AG04450 (cell line): ENCODE measurements at regions of chr15 and their contacts with region 1.

Region 1: DNA sequence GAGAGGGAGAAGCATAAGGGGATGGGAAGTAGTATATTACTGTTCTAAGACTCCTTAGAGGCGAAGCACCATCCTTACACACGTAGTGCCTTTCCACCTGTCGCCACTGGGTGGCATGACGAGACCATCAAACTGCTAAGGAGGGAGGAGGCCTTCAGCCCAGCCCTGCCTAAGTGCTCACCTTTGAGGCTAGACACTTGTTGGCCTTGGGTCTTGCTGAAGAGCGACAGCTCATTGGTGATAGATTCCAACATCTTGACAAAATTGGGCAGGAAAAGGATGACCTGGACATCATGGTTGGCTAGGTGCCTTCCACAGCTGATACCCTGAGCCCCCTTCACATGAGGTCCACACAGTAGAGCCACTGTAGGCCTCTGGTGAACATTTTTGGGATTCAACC is 19.6 kb downstream of the CLK3 start:
- DNase-seq: no peak
- H3K4me3 ChIP-seq: no peak overlapping the region
- H3K27ac ChIP-seq: no peak overlapping the region
- H3K27me3 ChIP-seq: no peaks in the 10 kb centered on the region
- CTCF ChIP-seq: peak; percentile 89

Region 2: GRCh38 chr15:74373731-74374647 is 261.2 kb before region 1 on chr15:
- CTCF ChIA-PET with region 1: interaction called, 34 read pairs
- POLR2A ChIA-PET with region 1: no interaction called
- DNase-seq: no peak
- H3K4me3 ChIP-seq: peak overlapping the region; percentile 79
- H3K27ac ChIP-seq: no peak overlapping the region
- H3K27me3 ChIP-seq: peaks cover 30% of the 10 kb centered on the region
- CTCF ChIP-seq: peak; percentile 89

Region 3: DNA sequence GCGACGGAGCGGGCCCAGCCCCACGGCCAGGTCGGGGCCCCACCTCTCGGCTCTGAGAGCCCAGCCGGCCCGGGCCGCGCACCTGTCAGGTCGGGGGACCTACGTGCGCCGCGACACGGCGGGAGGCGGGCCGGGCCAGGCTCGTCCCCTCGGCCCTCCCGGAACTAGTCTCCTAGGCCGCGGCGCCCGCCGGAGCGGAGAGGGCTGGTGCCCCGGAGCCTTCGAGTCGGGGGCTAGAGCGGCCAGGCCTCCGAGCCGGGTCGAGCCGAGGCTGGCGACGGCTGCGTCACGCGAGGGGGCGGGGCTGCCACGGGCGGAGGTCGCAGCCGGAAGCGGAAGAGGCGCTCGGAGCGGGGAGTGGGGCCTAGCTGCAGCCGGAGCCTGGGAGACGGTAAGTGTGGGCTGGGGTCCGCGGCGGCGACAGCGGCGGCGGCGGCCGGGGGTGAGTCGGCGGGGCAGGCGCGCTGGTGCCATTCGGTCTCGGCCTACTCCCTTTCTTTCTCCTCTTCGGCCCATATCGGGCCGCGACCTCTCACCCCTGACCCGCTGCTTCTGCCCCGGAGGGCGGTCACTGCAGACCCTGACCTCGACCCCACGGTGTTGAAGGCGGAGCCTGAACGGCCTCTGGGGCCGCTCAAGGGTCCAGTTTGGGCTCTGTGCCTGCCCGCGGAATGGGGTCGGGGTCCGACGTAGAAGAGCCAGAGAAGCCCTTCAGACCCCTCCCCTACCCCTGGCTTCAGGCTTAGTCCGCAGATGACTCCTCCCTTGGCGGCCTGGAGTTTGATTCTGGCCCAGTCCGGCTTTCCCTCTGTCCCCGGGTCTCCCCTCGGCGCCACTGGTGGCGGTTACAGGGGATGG is 19.5 kb before region 1 on chr15 and contains the start of gene CLK3:
- CTCF ChIA-PET with region 1: interaction called, 41 read pairs
- POLR2A ChIA-PET with region 1: no interaction called
- DNase-seq: peak; percentile 63
- H3K4me3 ChIP-seq: peak within 1 kb of the TSS; percentile 96
- H3K27ac ChIP-seq: peak within 1 kb of the TSS; percentile 89
- H3K27me3 ChIP-seq: peaks cover 8% of the 10 kb centered on the region
- CTCF ChIP-seq: no peak
- polyA plus RNA-seq, gene CLK3: 34.9 and 41.2 TPM in 2 replicates

Region 4: GRCh38 chr15:74653426-74654123 is 18.3 kb after region 1 on chr15:
- CTCF ChIA-PET with region 1: interaction called, 20 read pairs
- POLR2A ChIA-PET with region 1: no interaction called
- DNase-seq: no peak
- H3K4me3 ChIP-seq: no peak overlapping the region
- H3K27ac ChIP-seq: no peak overlapping the region
- H3K27me3 ChIP-seq: no peaks in the 10 kb centered on the region
- CTCF ChIP-seq: no peak

Region 5: DNA sequence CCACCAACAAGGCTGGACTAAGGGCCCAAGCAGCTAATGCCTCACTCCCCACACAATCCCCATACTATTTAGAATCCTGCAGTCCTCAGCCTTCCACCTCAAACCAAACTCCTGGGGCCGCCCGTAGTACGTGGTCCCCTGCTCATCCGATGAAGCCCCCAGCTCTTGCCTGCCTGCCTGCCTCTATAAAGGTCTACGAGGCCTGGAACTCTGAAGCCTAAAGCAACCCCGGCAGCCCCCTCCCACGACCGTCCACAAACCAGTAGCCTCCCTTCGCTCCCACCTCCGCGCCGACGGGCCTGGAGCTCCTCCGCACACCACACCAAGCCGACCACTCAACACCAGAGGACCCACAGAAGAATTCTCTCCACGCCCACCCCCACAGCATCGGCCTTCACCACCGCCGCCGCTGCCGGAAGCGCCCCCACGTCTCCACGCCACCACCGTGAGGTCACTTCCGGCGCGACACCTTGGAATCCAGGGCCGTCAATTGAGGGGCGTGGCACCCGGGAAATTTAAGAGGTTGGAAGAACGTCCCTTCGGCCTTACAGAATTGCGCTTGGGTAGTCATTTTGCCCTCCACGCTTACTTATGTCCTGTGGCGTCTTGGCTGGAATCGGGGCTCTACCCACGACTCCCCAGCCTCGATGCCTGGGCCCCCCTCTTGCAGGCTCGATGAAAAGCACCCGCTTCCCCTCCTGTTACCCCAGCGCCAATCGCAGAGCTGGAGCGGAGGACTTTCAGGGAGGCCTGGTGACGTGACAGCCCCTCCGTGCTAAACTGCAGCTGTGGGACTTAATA is 60.6 kb after region 1 on chr15 and contains the start of gene EDC3:
- CTCF ChIA-PET with region 1: interaction called, 10 read pairs
- POLR2A ChIA-PET with region 1: no interaction called
- DNase-seq: peak; percentile 23
- H3K4me3 ChIP-seq: peak within 1 kb of the TSS; percentile 93
- H3K27ac ChIP-seq: peak within 1 kb of the TSS; percentile 63
- H3K27me3 ChIP-seq: no peaks in the 10 kb centered on the region
- CTCF ChIP-seq: no peak
- polyA plus RNA-seq, gene EDC3: 37.1 and 43.6 TPM in 2 replicates

Region 6: DNA sequence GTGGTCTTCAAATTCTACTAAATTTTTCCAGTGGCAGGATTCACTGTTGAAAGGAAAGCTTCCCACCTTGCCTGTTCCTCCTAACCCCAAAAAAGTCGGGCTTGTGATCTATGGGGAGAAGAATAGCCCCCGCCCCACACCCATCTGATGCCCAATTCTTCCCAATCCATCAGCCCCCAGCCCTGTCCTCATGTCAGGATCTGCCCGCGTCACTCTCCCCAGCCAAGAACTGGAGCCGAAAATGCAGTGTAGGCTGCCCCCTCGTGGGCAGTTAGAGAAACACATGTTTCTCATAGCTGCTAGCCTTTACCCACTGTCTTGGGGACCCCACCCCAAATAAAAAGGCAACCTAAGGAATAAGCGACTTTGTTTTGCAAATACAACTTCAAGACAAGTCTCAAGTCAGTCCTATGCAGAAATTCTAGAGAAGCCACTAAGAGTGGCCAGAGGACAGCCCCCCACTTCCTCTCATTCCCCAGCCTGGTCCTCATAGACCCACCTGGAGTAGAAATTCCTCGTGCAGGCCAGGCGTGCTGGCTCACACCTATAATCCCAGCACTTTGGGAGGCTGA is 133.6 kb after region 1 on chr15:
- CTCF ChIA-PET with region 1: interaction called, 517 read pairs
- POLR2A ChIA-PET with region 1: interaction called, 3 read pairs
- DNase-seq: no peak
- H3K4me3 ChIP-seq: no peak overlapping the region
- H3K27ac ChIP-seq: no peak overlapping the region
- H3K27me3 ChIP-seq: peaks cover 6% of the 10 kb centered on the region
- CTCF ChIP-seq: peak; percentile 74

Region 7: GRCh38 chr15:74950078-74951000 is 315.1 kb after region 1 on chr15:
- CTCF ChIA-PET with region 1: interaction called, 11 read pairs
- POLR2A ChIA-PET with region 1: no interaction called
- DNase-seq: peak; percentile 21
- H3K4me3 ChIP-seq: no peak overlapping the region
- H3K27ac ChIP-seq: no peak overlapping the region
- H3K27me3 ChIP-seq: peaks cover 5% of the 10 kb centered on the region
- CTCF ChIP-seq: peak; percentile 100